ENCODE measurements at regions of chr12 and their contacts with region 1.

Region 1: DNA sequence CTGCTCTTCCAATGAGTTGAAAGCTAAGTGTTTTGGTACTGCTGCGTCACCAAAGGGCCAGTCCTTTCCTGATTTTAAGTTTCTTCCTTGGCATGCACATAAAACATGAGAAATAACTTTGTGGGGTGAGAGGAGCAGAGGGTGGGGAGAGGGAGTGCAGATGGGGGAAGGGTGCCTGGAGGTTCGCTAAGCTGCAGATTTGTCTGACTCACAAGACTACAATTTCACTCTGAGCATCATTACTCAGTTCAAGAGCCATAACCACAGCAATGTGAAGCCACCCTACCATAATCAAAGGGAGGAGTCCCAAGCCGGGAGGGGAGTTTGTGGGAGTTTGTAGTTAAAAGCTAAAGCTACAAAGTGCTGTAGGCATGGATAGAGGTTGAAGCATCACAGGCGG is 136.1 kb downstream of the ANO2 start:
- DNase-seq: peak; percentile 78
- H3K4me3 ChIP-seq: no peak overlapping the region
- CTCF ChIP-seq: no peak

Region 2: DNA sequence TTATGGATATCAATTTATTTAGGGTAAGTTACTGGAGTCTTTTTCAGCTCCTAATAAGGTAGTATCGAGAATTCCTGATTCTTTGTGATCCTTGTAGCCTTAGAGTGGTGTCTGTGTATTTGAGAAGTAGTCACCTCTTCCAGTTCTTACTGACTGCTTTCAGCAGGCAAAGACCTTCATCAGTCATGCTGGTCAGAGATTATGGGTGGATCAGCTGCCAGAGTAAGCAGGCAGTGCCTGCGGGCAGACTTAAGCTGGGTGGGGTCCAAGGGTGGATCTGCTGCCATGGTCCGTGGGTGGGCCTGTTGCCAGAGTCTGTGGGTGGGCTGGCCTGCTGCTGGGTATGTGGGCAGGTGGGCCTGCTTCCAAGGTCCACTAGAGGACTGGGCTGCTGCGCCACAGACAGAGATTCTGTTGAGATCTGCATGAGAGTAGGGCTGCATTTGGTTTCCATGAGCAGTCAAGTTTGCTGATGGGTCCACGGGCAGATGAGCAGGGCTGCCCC is 52.6 kb before region 1 on chr12:
- in situ Hi-C with region 1: loop called (anchors 5 kb)
- DNase-seq: no peak
- H3K4me3 ChIP-seq: no peak overlapping the region
- CTCF ChIP-seq: no peak

Region 3: DNA sequence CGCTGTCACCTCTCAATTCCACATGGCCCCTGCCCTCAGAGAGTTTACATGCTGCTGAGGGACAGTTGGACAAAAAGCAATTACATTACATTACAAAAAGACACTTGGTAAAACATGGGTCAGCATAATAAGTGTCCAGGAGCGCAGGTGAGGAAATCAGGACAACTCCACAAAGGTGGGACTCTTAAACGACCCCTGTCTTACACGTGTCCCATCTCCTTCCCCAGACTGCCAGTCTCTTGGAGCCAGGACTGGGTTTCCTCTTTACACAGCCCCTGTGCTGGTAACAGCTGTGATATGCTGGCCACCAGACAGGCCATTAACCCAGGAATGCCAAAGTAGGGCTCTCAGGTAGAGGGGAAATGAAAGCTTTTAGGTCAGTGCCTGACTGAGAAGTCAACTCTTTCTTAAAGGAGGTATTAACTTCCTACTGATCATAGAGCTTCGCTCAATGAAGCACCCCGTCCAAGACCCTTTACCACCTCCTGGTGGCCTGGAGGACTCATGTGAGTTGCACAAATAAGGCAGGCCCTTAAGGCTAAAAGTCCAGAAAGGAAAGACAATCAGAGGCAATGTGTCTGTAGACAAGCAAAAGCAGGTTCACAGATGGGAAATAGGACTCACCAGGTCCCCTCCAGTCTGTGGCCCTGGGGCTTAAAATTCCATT is 80.5 kb after region 1 on chr12:
- in situ Hi-C with region 1: loop called (anchors 5 kb)
- DNase-seq: no peak
- H3K4me3 ChIP-seq: no peak overlapping the region
- CTCF ChIP-seq: no peak